CD14-positive monocyte (primary cell): ENCODE measurements at regions of chr5 and their contacts with region 1.

Region 1: GRCh38 chr5:43207601-43208000 is 15.6 kb downstream of the NIM1K start:
- DNase-seq: no peak
- H3K4me3 ChIP-seq: no peak overlapping the region
- H3K4me3 Mint-ChIP-seq: no peak overlapping the region
- H3K27ac ChIP-seq: no peak overlapping the region
- H3K27ac Mint-ChIP-seq: no peak overlapping the region
- H3K4me1 ChIP-seq: no peaks in the 10 kb centered on the region
- H3K4me1 Mint-ChIP-seq: no peaks in the 10 kb centered on the region
- H3K27me3 ChIP-seq: peaks cover 2 to 9% of the 10 kb centered on the region in 2 donors
- H3K27me3 Mint-ChIP-seq: peaks cover 7 to 16% (median 12%) of the 10 kb centered on the region in 3 donors
- CTCF ChIP-seq: no peak

Region 2: DNA sequence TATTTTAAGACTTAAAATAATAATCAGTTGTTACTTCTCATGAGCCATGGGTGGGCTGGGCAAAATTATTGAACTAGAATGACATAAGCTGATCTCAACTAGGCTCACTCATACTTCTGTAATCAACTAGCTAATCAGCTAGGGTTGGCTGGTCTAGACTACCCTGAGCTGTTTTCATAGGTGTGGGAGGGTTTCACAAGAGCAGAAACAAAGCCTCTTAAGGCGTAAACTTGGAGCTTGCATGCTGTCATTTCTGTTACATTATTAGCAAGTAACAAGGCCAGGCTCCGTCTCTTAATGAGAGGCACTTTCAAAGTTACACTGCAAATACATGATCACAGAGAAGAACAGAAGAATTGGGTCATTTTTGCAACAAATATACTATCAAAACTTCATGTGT is 841.5 kb before region 1 on chr5:
- intact Hi-C with region 1: no loop called
- DNase-seq: no peak
- H3K4me3 ChIP-seq: no peak overlapping the region
- H3K4me3 Mint-ChIP-seq: no peak overlapping the region
- H3K27ac ChIP-seq: no peak overlapping the region
- H3K27ac Mint-ChIP-seq: no peak overlapping the region
- H3K4me1 ChIP-seq: no peaks in the 10 kb centered on the region
- H3K4me1 Mint-ChIP-seq: no peaks in the 10 kb centered on the region
- H3K27me3 ChIP-seq: no peaks in the 10 kb centered on the region
- H3K27me3 Mint-ChIP-seq: peaks cover 0 to 1% (median 0%) of the 10 kb centered on the region in 3 donors
- CTCF ChIP-seq: no peak

Region 3: DNA sequence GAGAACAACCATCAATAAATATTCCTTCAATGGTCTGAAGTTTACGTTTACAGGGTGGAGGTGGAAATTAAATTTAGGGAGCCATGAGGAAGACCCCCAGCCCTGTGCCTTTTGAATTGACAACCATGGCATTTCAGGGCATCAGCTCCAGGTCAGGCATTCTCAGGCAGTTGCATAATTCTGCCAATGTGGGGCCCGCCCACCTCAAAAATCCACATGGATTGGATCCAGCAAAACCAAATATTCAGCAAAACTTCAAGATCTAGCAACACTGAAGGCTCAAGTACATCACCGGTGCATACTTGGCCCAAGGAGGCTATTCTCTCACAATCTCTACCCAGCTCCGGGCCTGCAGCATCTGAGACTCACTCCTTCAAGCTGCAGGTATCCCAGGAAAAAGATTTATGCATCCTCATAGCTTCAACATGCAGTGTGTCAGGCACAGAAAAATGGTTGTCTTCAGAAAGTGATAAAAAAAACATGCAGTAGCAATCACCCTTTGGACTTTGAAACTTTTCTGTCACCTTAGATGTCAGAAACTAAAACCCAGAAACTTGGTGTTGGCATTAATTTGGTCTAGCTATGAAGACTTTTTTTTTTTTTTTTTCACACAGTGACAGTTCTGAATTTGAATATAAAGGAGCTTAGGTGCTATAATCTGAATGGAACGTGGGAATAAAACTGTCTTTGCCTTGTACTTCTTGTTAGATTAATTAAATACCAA is 146.1 kb before region 1 on chr5:
- intact Hi-C with region 1: no loop called
- DNase-seq: no peak
- H3K4me3 ChIP-seq: no peak overlapping the region
- H3K4me3 Mint-ChIP-seq: no peak overlapping the region
- H3K27ac ChIP-seq: no peak overlapping the region
- H3K27ac Mint-ChIP-seq: no peak overlapping the region
- H3K4me1 ChIP-seq: peaks cover 12 to 13% of the 10 kb centered on the region in 2 donors
- H3K4me1 Mint-ChIP-seq: peaks cover 12% of the 10 kb centered on the region
- H3K27me3 ChIP-seq: no peaks in the 10 kb centered on the region
- H3K27me3 Mint-ChIP-seq: no peaks in the 10 kb centered on the region
- CTCF ChIP-seq: no peak

Region 4: GRCh38 chr5:43305948-43306565 is 98.5 kb after region 1 on chr5:
- intact Hi-C with region 1: loop called in 1 of 2 experiments (anchors 10 kb)
- DNase-seq: peak; percentile 16 to 51 (median 31)
- H3K4me3 ChIP-seq: no peak overlapping the region
- H3K4me3 Mint-ChIP-seq: no peak overlapping the region
- H3K27ac ChIP-seq: no peak overlapping the region
- H3K27ac Mint-ChIP-seq: peak overlapping the region in 2 of 7 donors; percentile 32 to 43
- H3K4me1 ChIP-seq: no peaks in the 10 kb centered on the region
- H3K4me1 Mint-ChIP-seq: peaks cover 4% of the 10 kb centered on the region
- H3K27me3 ChIP-seq: no peaks in the 10 kb centered on the region
- H3K27me3 Mint-ChIP-seq: no peaks in the 10 kb centered on the region
- CTCF ChIP-seq: peak; percentile 82